Heart right ventricle (tissue), 16 donors: ENCODE measurements at regions of chr4 and their contacts with region 1.

Region 1: DNA sequence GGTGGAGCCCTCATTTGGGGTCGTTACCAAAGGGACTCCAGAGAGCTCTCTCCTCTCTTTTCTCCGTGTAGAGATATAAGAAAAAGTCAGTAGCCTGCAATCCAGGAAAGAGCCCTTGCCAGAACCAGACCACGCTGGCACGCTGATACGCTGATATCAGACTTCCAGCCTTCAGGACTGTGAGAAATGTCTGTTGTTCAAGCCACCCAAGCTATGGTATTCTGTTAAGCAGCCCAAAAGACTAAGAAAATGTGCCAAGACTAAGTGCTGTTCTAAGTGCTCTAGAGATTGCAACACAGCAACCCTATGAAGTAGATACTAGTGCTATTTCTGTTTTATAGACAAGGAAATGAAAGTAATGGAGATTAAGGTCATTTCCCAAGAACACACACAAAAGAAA is 205.7 kb downstream of the CAMK2D start:
- DNase-seq: peak; percentile 21 to 26
- ATAC-seq: peak; percentile 70 to 97 (median 89)
- H3K4me3 ChIP-seq: no peak overlapping the region
- H3K27ac ChIP-seq: peak overlapping the region; percentile 23 to 86 (median 79)
- H3K4me1 ChIP-seq: peaks cover 0 to 37% (median 26%) of the 10 kb centered on the region in 9 donors
- H3K27me3 ChIP-seq: no peaks in the 10 kb centered on the region
- CTCF ChIP-seq: no peak

Region 2: DNA sequence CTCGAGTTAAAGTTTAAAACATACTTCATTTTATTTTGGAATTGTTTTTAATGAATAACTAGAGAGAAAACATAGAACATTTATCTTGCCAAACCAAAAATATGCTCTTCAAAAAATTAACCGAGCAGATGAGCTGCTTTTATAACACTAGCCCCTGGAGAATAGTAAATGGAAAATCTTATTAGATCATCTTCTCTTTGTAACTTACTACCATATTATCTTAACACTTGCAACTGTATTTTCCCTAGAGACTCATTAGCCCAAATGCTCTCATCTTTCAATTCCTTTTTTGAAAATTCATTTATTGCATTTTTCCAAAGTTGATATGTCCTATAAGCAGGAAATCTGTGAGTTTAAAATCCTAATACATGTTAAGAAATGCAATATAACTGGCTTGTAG is 62.3 kb after region 1 on chr4:
- intact Hi-C with region 1: loop called in 1 of 10 experiments (anchors 10 kb)
- DNase-seq: no peak
- ATAC-seq: peak in 3 of 8 donors; percentile 39 to 56 (median 40)
- H3K4me3 ChIP-seq: no peak overlapping the region
- H3K27ac ChIP-seq: peak overlapping the region in 7 of 10 donors; percentile 4 to 62 (median 51)
- H3K4me1 ChIP-seq: peaks cover 0 to 82% (median 42%) of the 10 kb centered on the region in 9 donors
- H3K27me3 ChIP-seq: no peaks in the 10 kb centered on the region
- CTCF ChIP-seq: no peak

Region 3: DNA sequence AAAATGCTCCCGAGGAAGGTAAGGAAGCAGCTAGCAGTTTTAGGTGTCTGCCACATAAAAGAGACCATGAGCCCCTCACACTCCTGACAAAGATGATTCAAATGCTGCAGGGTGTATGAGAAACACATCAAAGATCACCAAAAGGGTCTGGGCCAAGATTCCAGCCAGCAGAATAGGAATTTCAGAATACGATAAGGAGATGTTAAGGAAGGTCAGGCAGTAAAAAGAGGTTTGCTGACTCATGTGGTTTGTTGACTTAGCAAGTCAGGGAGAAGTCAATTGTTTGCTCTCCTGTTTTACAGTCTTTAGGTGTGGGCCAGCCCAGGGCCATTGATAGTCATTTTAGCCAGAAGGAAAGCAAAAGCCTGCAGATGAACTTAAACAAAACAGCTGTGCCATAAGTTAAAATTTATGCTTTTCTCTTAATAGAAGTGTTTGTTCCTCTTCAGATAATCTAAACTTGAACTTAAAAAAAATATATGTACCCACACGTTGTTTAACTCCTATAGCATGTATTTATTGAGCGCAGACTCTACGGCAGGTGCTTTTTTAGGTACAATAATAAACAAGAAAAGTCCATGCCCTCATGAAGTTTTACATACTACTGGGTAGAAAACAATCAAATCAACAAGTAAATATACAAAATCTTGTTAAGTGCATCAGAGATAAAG is 90.0 kb after region 1 on chr4:
- intact Hi-C with region 1: loop called in 1 of 10 experiments (anchors 10 kb)
- DNase-seq: no peak
- ATAC-seq: peak in 7 of 8 donors; percentile 23 to 69 (median 46)
- H3K4me3 ChIP-seq: no peak overlapping the region
- H3K27ac ChIP-seq: peak overlapping the region in 9 of 10 donors; percentile 12 to 69 (median 57)
- H3K4me1 ChIP-seq: peaks cover 6 to 65% (median 53%) of the 10 kb centered on the region in 9 donors
- H3K27me3 ChIP-seq: no peaks in the 10 kb centered on the region
- CTCF ChIP-seq: no peak

Region 4: GRCh38 chr4:113673450-113673849 is 117.6 kb after region 1 on chr4:
- intact Hi-C with region 1: loop called in 1 of 10 experiments (anchors 10 kb)
- DNase-seq: no peak
- ATAC-seq: peak in 4 of 8 donors; percentile 33 to 70 (median 50)
- H3K4me3 ChIP-seq: no peak overlapping the region
- H3K27ac ChIP-seq: peak overlapping the region in 3 of 10 donors; percentile 0 to 21 (median 12)
- H3K4me1 ChIP-seq: peaks cover 0 to 70% (median 54%) of the 10 kb centered on the region in 9 donors
- H3K27me3 ChIP-seq: no peaks in the 10 kb centered on the region
- CTCF ChIP-seq: no peak